Esophagus muscularis mucosa (tissue), 4 donors: ENCODE measurements at regions of chr22 and their contacts with region 1.

Region 1: GRCh38 chr22:17501679-17502285 is 61.5 kb upstream of the SLC25A18 start:
- DNase-seq: no peak
- H3K4me3 ChIP-seq: no peak overlapping the region
- H3K27ac ChIP-seq: no peak overlapping the region
- H3K4me1 ChIP-seq: no peaks in the 10 kb centered on the region
- H3K27me3 ChIP-seq: no peaks in the 10 kb centered on the region
- CTCF ChIP-seq: peak; percentile 60 to 65 (median 61)
- EP300 ChIP-seq: no peak
- POLR2A ChIP-seq: no peak

Region 2: GRCh38 chr22:17077255-17077654 is 424.5 kb before region 1 on chr22:
- intact Hi-C with region 1: loop called (anchors 5 kb)
- DNase-seq: no peak
- H3K4me3 ChIP-seq: no peak overlapping the region
- H3K27ac ChIP-seq: no peak overlapping the region
- H3K4me1 ChIP-seq: peaks cover 0 to 5% (median 2%) of the 10 kb centered on the region in 4 donors
- H3K27me3 ChIP-seq: peaks cover 0 to 19% (median 0%) of the 10 kb centered on the region in 4 donors
- CTCF ChIP-seq: no peak
- EP300 ChIP-seq: no peak
- POLR2A ChIP-seq: no peak

Region 3: GRCh38 chr22:17171313-17172171 is 330.2 kb before region 1 on chr22:
- intact Hi-C with region 1: loop called (anchors 2 kb)
- DNase-seq: peak; percentile 95
- H3K4me3 ChIP-seq: peak overlapping the region; percentile 73 to 85 (median 80)
- H3K27ac ChIP-seq: peak overlapping the region; percentile 92 to 97 (median 96)
- H3K4me1 ChIP-seq: peaks cover 10 to 28% (median 23%) of the 10 kb centered on the region in 4 donors
- H3K27me3 ChIP-seq: no peaks in the 10 kb centered on the region
- CTCF ChIP-seq: peak; percentile 62 to 88 (median 71)
- EP300 ChIP-seq: no peak
- POLR2A ChIP-seq: no peak

Region 4: GRCh38 chr22:17368554-17369438 is 133.0 kb before region 1 on chr22:
- intact Hi-C with region 1: loop called (anchors 10 kb)
- DNase-seq: no peak
- H3K4me3 ChIP-seq: peak overlapping the region; percentile 63 to 72 (median 68)
- H3K27ac ChIP-seq: peak overlapping the region; percentile 33 to 84 (median 76)
- H3K4me1 ChIP-seq: peaks cover 0 to 36% (median 30%) of the 10 kb centered on the region in 4 donors
- H3K27me3 ChIP-seq: peaks cover 0 to 79% (median 13%) of the 10 kb centered on the region in 4 donors
- CTCF ChIP-seq: no peak
- EP300 ChIP-seq: no peak
- POLR2A ChIP-seq: no peak

Region 5: DNA sequence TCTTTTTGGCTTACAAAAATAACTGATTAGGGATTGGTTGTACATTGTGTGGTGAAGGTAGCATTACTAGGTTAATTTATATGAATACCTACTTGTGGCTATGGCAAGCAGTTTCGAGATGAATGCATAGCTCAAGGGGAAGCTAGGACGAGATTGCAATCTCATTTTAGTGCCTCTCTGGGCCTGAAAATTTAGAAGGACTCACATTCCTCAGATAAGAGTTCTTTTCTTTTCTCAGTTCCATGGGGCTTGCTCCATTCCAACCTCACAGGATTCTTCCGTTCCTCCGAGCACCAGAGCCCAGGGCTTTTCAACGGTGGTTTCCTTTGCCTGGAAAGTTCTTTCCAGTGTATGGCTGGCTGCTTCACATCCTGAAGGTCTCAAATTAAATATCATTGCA is 50.5 kb before region 1 on chr22:
- intact Hi-C with region 1: no loop called
- DNase-seq: no peak
- H3K4me3 ChIP-seq: no peak overlapping the region
- H3K27ac ChIP-seq: no peak overlapping the region
- H3K4me1 ChIP-seq: no peaks in the 10 kb centered on the region
- H3K27me3 ChIP-seq: no peaks in the 10 kb centered on the region
- CTCF ChIP-seq: no peak
- EP300 ChIP-seq: no peak
- POLR2A ChIP-seq: no peak